ENCODE measurements at regions of chr4 and their contacts with region 1.

Region 1: GRCh38 chr4:68271851-68272756 is 26.6 kb upstream of the TMPRSS11B start:
- DNase-seq: peak in 1 of 2 experiments; percentile 49
- H3K4me3 ChIP-seq: no peak overlapping the region
- H3K4me3 Mint-ChIP-seq: no peak overlapping the region
- H3K27ac Mint-ChIP-seq: peak overlapping the region; percentile 94
- H3K4me1 ChIP-seq: peaks cover 29% of the 10 kb centered on the region
- H3K4me1 Mint-ChIP-seq: peaks cover 5% of the 10 kb centered on the region
- H3K27me3 ChIP-seq: no peaks in the 10 kb centered on the region
- H3K27me3 Mint-ChIP-seq: no peaks in the 10 kb centered on the region
- CTCF ChIP-seq: peak; percentile 50 to 75

Region 2: DNA sequence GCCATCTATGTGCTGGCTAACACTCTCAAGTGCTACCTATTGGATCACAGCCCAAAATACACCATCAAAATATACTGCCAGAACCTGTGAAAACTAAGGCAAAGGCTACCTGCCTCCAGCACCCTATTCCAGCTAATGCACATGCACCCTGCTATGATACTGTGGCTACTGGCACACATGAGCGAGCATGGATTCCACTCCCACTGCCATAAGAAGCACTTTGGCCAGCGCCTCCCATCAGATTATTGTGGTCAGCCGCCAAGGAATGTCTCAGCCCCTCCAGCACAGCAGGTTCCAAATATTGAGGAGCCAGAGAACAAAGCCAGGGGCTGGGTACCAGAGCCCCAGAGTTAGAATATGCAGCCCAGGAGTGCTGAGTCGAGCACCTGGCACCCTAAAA is 109.9 kb before region 1 on chr4:
- CTCF ChIA-PET with region 1: no interaction called
- POLR2A ChIA-PET with region 1: no interaction called
- intact Hi-C with region 1: no loop called
- DNase-seq: no peak
- H3K4me3 ChIP-seq: no peak overlapping the region
- H3K4me3 Mint-ChIP-seq: no peak overlapping the region
- H3K27ac Mint-ChIP-seq: no peak overlapping the region
- H3K4me1 ChIP-seq: no peaks in the 10 kb centered on the region
- H3K4me1 Mint-ChIP-seq: no peaks in the 10 kb centered on the region
- H3K27me3 ChIP-seq: no peaks in the 10 kb centered on the region
- H3K27me3 Mint-ChIP-seq: peaks cover 4% of the 10 kb centered on the region
- CTCF ChIP-seq: no peak

Region 3: GRCh38 chr4:68283714-68284113 is 11.6 kb after region 1 on chr4:
- CTCF ChIA-PET with region 1: no interaction called
- POLR2A ChIA-PET with region 1: no interaction called
- intact Hi-C with region 1: loop called (anchors 1 kb)
- DNase-seq: no peak
- H3K4me3 ChIP-seq: no peak overlapping the region
- H3K4me3 Mint-ChIP-seq: no peak overlapping the region
- H3K27ac Mint-ChIP-seq: peak overlapping the region; percentile 82
- H3K4me1 ChIP-seq: peaks cover 41% of the 10 kb centered on the region
- H3K4me1 Mint-ChIP-seq: peaks cover 19% of the 10 kb centered on the region
- H3K27me3 ChIP-seq: no peaks in the 10 kb centered on the region
- H3K27me3 Mint-ChIP-seq: no peaks in the 10 kb centered on the region
- CTCF ChIP-seq: no peak

Region 4: GRCh38 chr4:68304731-68305130 is 32.6 kb after region 1 on chr4:
- CTCF ChIA-PET with region 1: no interaction called
- POLR2A ChIA-PET with region 1: no interaction called
- intact Hi-C with region 1: loop called (anchors 1 kb)
- DNase-seq: no peak
- H3K4me3 ChIP-seq: no peak overlapping the region
- H3K4me3 Mint-ChIP-seq: no peak overlapping the region
- H3K27ac Mint-ChIP-seq: no peak overlapping the region
- H3K4me1 ChIP-seq: no peaks in the 10 kb centered on the region
- H3K4me1 Mint-ChIP-seq: no peaks in the 10 kb centered on the region
- H3K27me3 ChIP-seq: no peaks in the 10 kb centered on the region
- H3K27me3 Mint-ChIP-seq: no peaks in the 10 kb centered on the region
- CTCF ChIP-seq: no peak

Region 5: GRCh38 chr4:68349649-68350360 is 77.7 kb after region 1 on chr4 and contains the start of gene YTHDC1:
- CTCF ChIA-PET with region 1: interaction called, 4 read pairs
- POLR2A ChIA-PET with region 1: interaction called, 5 read pairs
- intact Hi-C with region 1: loop called (anchors 2 kb)
- DNase-seq: peak; percentile 96 to 97
- H3K4me3 ChIP-seq: peak within 1 kb of the TSS; percentile 74
- H3K4me3 Mint-ChIP-seq: peak within 1 kb of the TSS; percentile 92
- H3K27ac Mint-ChIP-seq: peak within 1 kb of the TSS; percentile 95
- H3K4me1 ChIP-seq: peaks cover 29% of the 10 kb centered on the region
- H3K4me1 Mint-ChIP-seq: peaks cover 7% of the 10 kb centered on the region
- H3K27me3 ChIP-seq: no peaks in the 10 kb centered on the region
- H3K27me3 Mint-ChIP-seq: no peaks in the 10 kb centered on the region
- CTCF ChIP-seq: no peak
- total RNA-seq, gene YTHDC1: 101 and 109 TPM in 2 replicates

Region 6: GRCh38 chr4:68375667-68376559 is 103.8 kb after region 1 on chr4:
- CTCF ChIA-PET with region 1: interaction called, 32 read pairs
- POLR2A ChIA-PET with region 1: no interaction called
- intact Hi-C with region 1: loop called (anchors 1 kb)
- DNase-seq: peak; percentile 65 to 78
- H3K4me3 ChIP-seq: peak overlapping the region; percentile 50
- H3K4me3 Mint-ChIP-seq: peak overlapping the region; percentile 78
- H3K27ac Mint-ChIP-seq: no peak overlapping the region
- H3K4me1 ChIP-seq: no peaks in the 10 kb centered on the region
- H3K4me1 Mint-ChIP-seq: peaks cover 7% of the 10 kb centered on the region
- H3K27me3 ChIP-seq: no peaks in the 10 kb centered on the region
- H3K27me3 Mint-ChIP-seq: no peaks in the 10 kb centered on the region
- CTCF ChIP-seq: peak; percentile 70 to 84

Region 7: GRCh38 chr4:68655764-68656444 is 383.8 kb after region 1 on chr4:
- CTCF ChIA-PET with region 1: no interaction called
- POLR2A ChIA-PET with region 1: no interaction called
- intact Hi-C with region 1: loop called (anchors 10 kb)
- DNase-seq: peak; percentile 45 to 48
- H3K4me3 ChIP-seq: no peak overlapping the region
- H3K4me3 Mint-ChIP-seq: peak overlapping the region; percentile 54
- H3K27ac Mint-ChIP-seq: peak overlapping the region; percentile 39
- H3K4me1 ChIP-seq: peaks cover 28% of the 10 kb centered on the region
- H3K4me1 Mint-ChIP-seq: peaks cover 17% of the 10 kb centered on the region
- H3K27me3 ChIP-seq: no peaks in the 10 kb centered on the region
- H3K27me3 Mint-ChIP-seq: no peaks in the 10 kb centered on the region
- CTCF ChIP-seq: no peak

Region 8: GRCh38 chr4:69617083-69617694 is 1345.1 kb after region 1 on chr4:
- CTCF ChIA-PET with region 1: no interaction called
- POLR2A ChIA-PET with region 1: no interaction called
- intact Hi-C with region 1: loop called (anchors 10 kb)
- DNase-seq: peak in 1 of 2 experiments; percentile 52
- H3K4me3 ChIP-seq: no peak overlapping the region
- H3K4me3 Mint-ChIP-seq: no peak overlapping the region
- H3K27ac Mint-ChIP-seq: no peak overlapping the region
- H3K4me1 ChIP-seq: no peaks in the 10 kb centered on the region
- H3K4me1 Mint-ChIP-seq: no peaks in the 10 kb centered on the region
- H3K27me3 ChIP-seq: no peaks in the 10 kb centered on the region
- H3K27me3 Mint-ChIP-seq: no peaks in the 10 kb centered on the region
- CTCF ChIP-seq: peak; percentile 52 to 54